Gastrocnemius medialis (tissue), 4 donors: ENCODE measurements at regions of chr10 and their contacts with region 1.

Region 1: DNA sequence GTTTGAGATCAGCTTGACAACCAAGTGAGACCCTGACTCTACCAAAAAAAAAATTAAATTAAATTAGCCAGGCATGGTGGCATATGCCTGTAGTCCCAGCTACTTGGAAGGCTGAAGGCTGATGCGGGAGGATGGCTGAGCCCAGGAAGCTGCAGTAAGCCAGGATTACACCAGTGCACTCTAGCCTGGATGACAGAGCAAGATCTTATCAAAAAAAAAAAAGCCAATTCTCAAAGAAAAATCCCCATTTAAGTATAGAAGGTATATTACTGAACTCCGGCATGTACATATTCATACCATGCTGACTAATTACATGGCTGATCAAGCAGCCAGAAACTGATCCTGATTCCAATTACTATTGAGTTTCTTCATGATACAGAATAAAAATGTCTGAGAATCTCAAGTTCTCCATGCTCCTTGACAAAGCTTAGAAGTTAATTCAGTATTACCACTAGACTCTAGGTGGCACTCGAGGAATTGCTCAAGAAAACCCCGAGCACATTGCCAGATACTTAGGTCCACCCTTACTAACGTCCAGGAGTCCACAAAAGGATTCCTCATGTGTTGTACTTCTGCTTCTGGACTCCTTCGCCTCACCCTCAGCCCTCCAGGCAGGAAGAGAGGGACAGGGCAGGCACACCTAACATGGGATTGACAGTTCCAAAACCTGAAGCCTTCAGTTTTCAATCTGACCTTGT is 148.9 kb downstream of the PARD3 start:
- DNase-seq: peak; percentile 39 to 59
- ATAC-seq: peak; percentile 86 to 95
- H3K4me3 ChIP-seq: no peak overlapping the region
- H3K27ac ChIP-seq: no peak overlapping the region
- H3K4me1 ChIP-seq: peaks cover 8 to 15% of the 10 kb centered on the region in 2 donors
- H3K27me3 ChIP-seq: no peaks in the 10 kb centered on the region
- CTCF ChIP-seq: peak; percentile 25 to 68 (median 45)
- POLR2A ChIP-seq: no peak

Region 2: GRCh38 chr10:34824870-34825269 is 158.7 kb after region 1 on chr10:
- in situ Hi-C with region 1: loop called in 3 of 4 experiments (anchors 25 kb)
- intact Hi-C with region 1: no loop called
- DNase-seq: no peak
- ATAC-seq: peak; percentile 18 to 28
- H3K4me3 ChIP-seq: no peak overlapping the region
- H3K27ac ChIP-seq: peak overlapping the region in 2 of 4 donors; percentile 13 to 36
- H3K4me1 ChIP-seq: peaks cover 14 to 16% of the 10 kb centered on the region in 2 donors
- H3K27me3 ChIP-seq: no peaks in the 10 kb centered on the region
- CTCF ChIP-seq: peak in 2 of 5 experiments; percentile 28 to 44
- POLR2A ChIP-seq: no peak

Region 3: GRCh38 chr10:34933676-34934075 is 267.5 kb after region 1 on chr10:
- in situ Hi-C with region 1: loop called in 1 of 4 experiments (anchors 25 kb)
- intact Hi-C with region 1: no loop called
- DNase-seq: peak; percentile 30 to 55
- ATAC-seq: peak; percentile 68
- H3K4me3 ChIP-seq: no peak overlapping the region
- H3K27ac ChIP-seq: peak overlapping the region in 3 of 4 donors; percentile 9 to 59 (median 43)
- H3K4me1 ChIP-seq: peaks cover 5 to 13% of the 10 kb centered on the region in 2 donors
- H3K27me3 ChIP-seq: no peaks in the 10 kb centered on the region
- CTCF ChIP-seq: no peak
- POLR2A ChIP-seq: no peak

Region 4: DNA sequence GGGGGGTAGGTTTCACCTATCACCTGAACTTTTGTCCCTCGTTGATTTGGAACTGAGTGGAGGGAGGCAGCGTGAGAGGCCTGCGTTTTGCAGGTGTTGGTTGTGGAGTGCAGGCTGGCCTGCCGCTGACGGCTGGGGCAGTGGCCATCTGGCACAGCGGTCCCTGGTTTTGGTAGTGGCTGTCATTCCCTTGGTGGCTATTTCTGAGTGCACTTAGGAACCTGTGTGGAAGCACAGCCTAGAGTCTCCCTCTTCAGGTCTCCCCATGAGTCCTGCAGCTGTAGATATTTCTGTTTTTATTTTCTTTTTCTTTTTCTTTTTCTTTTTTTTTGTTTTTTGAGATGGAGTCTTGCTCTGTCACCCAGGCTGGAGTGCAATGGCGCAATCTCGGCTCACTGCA is 294.8 kb after region 1 on chr10:
- in situ Hi-C with region 1: loop called in 1 of 4 experiments (anchors 25 kb)
- intact Hi-C with region 1: loop called (anchors 1 kb)
- DNase-seq: peak; percentile 15 to 27
- ATAC-seq: peak; percentile 76 to 93
- H3K4me3 ChIP-seq: no peak overlapping the region
- H3K27ac ChIP-seq: no peak overlapping the region
- H3K4me1 ChIP-seq: no peaks in the 10 kb centered on the region
- H3K27me3 ChIP-seq: no peaks in the 10 kb centered on the region
- CTCF ChIP-seq: peak in 2 of 5 experiments; percentile 43
- POLR2A ChIP-seq: no peak